ENCODE measurements at regions of chr1 and their contacts with region 1.

Region 1: DNA sequence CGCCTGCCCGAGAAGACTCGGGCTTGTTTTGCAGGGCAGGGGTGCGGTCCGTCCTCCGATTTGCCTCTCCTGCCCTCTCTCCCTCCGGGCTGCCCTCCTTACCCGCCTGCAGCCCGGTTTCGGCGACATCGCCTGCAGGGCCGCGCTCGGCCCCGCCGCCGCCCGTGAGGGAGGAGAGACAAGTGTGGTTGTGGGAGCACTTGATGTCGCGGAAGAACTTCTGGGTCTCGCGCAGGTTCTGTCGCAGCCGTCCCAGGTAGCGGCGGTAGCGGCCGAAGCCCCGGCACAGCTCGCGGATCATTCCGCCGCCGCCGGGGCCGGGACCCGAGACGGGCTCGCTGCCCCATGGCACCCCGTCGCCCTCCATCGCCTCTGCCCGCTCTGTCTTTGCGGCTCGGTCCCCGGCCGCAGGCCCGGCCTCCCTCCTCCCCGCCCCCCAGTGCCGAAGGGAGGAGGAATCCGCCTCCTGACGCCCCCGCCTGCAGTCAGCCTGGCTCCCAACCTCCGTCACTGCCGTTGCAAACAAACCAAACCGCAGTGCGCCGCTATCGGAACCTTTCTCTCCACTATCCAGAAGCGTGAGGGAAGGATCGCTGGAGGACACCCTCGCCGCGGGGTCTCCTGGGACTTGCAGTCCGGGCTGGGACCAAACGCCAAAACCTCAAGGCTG is at the start of gene DSTYK:
- DNase-seq: peak; percentile 92
- ATAC-seq: peak; percentile 91
- H3K4me3 ChIP-seq: peak within 1 kb of the TSS; percentile 74 to 99
- H3K27ac ChIP-seq: peak within 1 kb of the TSS; percentile 74
- H3K4me1 ChIP-seq: peaks cover 2 to 16% of the 10 kb centered on the region in 2 experiments; a peak in 2 of 4 replicates
- H3K27me3 ChIP-seq: no peaks in the 10 kb centered on the region
- CTCF ChIP-seq: no peak
- POLR2A ChIP-seq: peak; percentile 86
- RAD21 ChIP-seq: peak; percentile 40
- total RNA-seq, gene DSTYK: 6.6 TPM

Region 2: DNA sequence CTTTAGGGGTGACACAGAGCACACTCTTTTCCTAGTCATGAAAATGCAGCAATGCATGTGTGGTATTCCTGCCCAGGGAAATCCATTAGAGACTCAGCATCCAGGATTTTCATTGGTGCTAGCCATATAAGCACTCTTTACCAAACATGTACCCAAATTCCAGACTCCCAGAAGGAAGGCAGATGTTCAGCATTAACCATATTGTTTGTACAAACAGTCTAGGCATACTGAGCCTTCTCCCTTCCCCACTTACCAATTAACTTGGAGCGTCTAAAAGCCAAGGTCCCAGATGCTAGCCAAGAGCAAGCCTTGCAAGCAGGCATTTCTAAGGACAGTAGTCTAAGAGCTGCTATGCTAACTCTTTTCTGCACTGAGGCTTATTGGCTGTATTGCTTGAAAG is 1388.0 kb before region 1 on chr1:
- CTCF ChIA-PET with region 1: no interaction called
- POLR2A ChIA-PET with region 1: no interaction called
- RAD21 ChIA-PET with region 1: no interaction called
- intact Hi-C with region 1: no loop called
- DNase-seq: no peak
- ATAC-seq: no peak
- H3K4me3 ChIP-seq: no peak overlapping the region
- H3K27ac ChIP-seq: no peak overlapping the region
- H3K4me1 ChIP-seq: no peaks in the 10 kb centered on the region
- H3K27me3 ChIP-seq: no peaks in the 10 kb centered on the region
- CTCF ChIP-seq: no peak
- POLR2A ChIP-seq: no peak
- RAD21 ChIP-seq: no peak

Region 3: GRCh38 chr1:205121660-205122488 is 89.4 kb before region 1 on chr1 and contains the start of gene RBBP5:
- CTCF ChIA-PET with region 1: no interaction called
- POLR2A ChIA-PET with region 1: no interaction called
- RAD21 ChIA-PET with region 1: no interaction called
- intact Hi-C with region 1: loop called (anchors 2 kb)
- DNase-seq: peak; percentile 97
- ATAC-seq: peak; percentile 99
- H3K4me3 ChIP-seq: peak within 1 kb of the TSS; percentile 90 to 98
- H3K27ac ChIP-seq: peak within 1 kb of the TSS; percentile 70
- H3K4me1 ChIP-seq: peaks cover 7 to 22% of the 10 kb centered on the region in 2 experiments; a peak in 3 of 4 replicates
- H3K27me3 ChIP-seq: no peaks in the 10 kb centered on the region
- CTCF ChIP-seq: peak; percentile 72 to 96 (median 72)
- POLR2A ChIP-seq: peak; percentile 84
- RAD21 ChIP-seq: peak; percentile 48
- total RNA-seq, gene RBBP5: 24.5 TPM

Region 4: DNA sequence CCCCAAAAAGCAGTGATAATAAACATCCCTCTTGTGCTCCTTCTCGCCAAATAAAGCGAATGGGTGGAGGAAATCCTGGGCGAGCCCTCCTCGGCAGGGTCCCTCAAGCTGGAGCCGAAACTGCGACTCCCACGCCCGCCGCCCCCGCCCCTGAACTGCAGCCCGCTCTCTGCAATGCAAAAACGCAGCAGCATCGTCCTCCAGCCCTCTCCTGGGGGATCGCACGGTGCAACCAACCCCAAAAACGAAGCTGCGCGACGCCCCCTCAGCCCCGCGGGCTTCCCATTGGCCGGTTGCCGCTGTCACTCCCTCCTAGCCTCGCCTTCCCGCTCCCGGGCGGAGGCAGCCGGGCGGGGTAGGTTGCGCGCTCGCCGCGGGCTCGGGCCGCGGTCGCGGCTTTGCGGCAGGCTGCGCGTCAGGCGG is 16.3 kb after region 1 on chr1 and contains the start of gene TMCC2:
- CTCF ChIA-PET with region 1: interaction called, 4 read pairs
- POLR2A ChIA-PET with region 1: interaction called, 3 read pairs
- RAD21 ChIA-PET with region 1: no interaction called
- intact Hi-C with region 1: loop called (anchors 1 kb)
- DNase-seq: peak; percentile 74
- ATAC-seq: peak; percentile 90
- H3K4me3 ChIP-seq: peak within 1 kb of the TSS; percentile 54 to 67
- H3K27ac ChIP-seq: no peak within 1 kb of the TSS; the same call in 1 of the 2 replicates
- H3K4me1 ChIP-seq: peaks cover 11 to 28% of the 10 kb centered on the region in 2 experiments; a peak in 3 of 4 replicates
- H3K27me3 ChIP-seq: no peaks in the 10 kb centered on the region
- CTCF ChIP-seq: no peak
- POLR2A ChIP-seq: peak; percentile 34
- RAD21 ChIP-seq: no peak
- total RNA-seq, gene TMCC2: 2.7 TPM

Measured in HCT116 (cell line).